Caco-2 (cell line): ENCODE measurements at regions of chr1 and their contacts with region 1.

Region 1: DNA sequence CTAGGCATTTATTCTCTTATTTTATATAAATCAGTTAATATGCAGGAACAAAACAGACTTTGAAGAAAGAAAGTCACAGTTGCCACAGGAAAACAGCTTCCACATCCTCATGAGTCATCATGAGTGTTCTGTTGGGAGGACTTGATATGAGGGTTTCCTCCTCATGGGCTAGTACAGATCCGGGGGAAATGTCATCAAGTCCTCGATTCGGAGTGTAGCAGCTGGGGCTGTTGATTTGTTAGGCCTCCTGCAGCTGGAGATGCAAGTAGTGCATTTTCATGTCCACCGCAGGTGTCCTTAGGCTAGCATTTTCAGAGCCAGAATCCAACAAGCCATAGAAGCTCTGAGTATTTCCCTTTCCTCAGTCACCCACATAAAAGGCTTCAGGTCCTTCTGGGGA is 36.7 kb downstream of the ADAM30 start:
- DNase-seq: no peak
- H3K4me3 ChIP-seq: no peak overlapping the region
- H3K4me3 Mint-ChIP-seq: no peak overlapping the region
- H3K27ac Mint-ChIP-seq: no peak overlapping the region
- H3K4me1 ChIP-seq: peaks cover 16% of the 10 kb centered on the region
- H3K4me1 Mint-ChIP-seq: peaks cover 6% of the 10 kb centered on the region
- H3K27me3 ChIP-seq: no peaks in the 10 kb centered on the region
- H3K27me3 Mint-ChIP-seq: no peaks in the 10 kb centered on the region
- CTCF ChIP-seq: no peak

Region 2: DNA sequence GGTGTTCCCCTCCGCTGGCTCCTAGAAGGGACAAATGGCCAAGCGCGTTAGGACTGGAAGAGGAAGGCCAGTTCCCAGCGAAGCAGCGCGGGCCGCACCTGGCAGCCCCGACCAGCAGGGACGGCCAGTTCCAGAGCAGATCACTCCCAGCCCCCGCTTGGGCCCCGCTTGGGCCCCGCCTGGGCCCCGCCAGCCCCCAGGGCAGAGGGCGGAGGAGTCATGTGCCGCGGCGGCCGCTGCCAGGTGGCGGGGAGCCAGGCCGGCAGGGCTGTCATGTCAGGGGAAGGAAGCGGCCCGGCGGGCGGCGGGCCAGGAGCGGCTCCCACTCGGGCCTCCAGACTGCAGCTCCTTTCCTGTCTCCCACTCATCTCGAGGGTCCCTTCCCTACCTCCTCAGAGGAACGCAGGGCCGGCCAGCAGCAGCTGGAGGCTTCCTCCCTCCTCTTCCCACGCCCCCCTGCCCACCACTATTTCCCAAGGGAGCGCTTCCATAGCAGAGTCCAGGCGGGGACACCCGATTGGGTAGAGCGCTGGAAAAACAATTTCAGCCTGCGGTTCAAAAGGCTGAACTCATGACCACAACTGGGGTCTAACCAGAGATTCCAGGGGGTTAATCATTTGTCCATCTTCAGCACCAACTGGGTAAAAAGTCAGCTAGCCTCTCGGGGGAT is 228.1 kb before region 1 on chr1:
- CTCF ChIA-PET with region 1: no interaction called
- POLR2A ChIA-PET with region 1: no interaction called
- intact Hi-C with region 1: no loop called
- DNase-seq: no peak
- H3K4me3 ChIP-seq: no peak overlapping the region
- H3K4me3 Mint-ChIP-seq: no peak overlapping the region
- H3K27ac Mint-ChIP-seq: no peak overlapping the region
- H3K4me1 ChIP-seq: no peaks in the 10 kb centered on the region
- H3K4me1 Mint-ChIP-seq: no peaks in the 10 kb centered on the region
- H3K27me3 ChIP-seq: no peaks in the 10 kb centered on the region
- H3K27me3 Mint-ChIP-seq: no peaks in the 10 kb centered on the region
- CTCF ChIP-seq: no peak

Region 3: DNA sequence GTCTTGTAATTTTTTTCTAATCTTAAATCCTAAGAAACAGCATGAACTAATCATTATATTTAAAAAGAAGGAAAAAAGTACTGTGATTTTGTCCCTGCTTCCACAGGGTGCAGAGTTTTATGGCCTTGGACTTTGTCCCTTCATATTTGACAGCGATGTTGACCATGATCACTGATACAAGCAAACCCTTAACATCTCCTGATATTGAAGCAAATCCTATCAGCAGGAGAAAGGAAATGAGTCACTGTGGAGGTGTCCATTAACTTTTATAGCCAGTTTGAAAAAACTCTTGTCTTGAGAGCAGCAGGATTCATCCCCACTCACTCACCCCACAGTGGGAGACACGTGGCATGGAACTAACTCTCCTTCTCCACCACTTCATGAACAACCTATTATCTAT is 43.2 kb before region 1 on chr1:
- CTCF ChIA-PET with region 1: no interaction called
- POLR2A ChIA-PET with region 1: no interaction called
- intact Hi-C with region 1: loop called (anchors 2 kb)
- DNase-seq: peak; percentile 53 to 60
- H3K4me3 ChIP-seq: no peak overlapping the region
- H3K4me3 Mint-ChIP-seq: peak overlapping the region; percentile 40
- H3K27ac Mint-ChIP-seq: peak overlapping the region; percentile 74
- H3K4me1 ChIP-seq: peaks cover 31% of the 10 kb centered on the region
- H3K4me1 Mint-ChIP-seq: peaks cover 28% of the 10 kb centered on the region
- H3K27me3 ChIP-seq: no peaks in the 10 kb centered on the region
- H3K27me3 Mint-ChIP-seq: no peaks in the 10 kb centered on the region
- CTCF ChIP-seq: no peak

Region 4: GRCh38 chr1:119827010-119827409 is 32.6 kb before region 1 on chr1:
- CTCF ChIA-PET with region 1: no interaction called
- POLR2A ChIA-PET with region 1: no interaction called
- intact Hi-C with region 1: loop called (anchors 5 kb)
- DNase-seq: no peak
- H3K4me3 ChIP-seq: no peak overlapping the region
- H3K4me3 Mint-ChIP-seq: no peak overlapping the region
- H3K27ac Mint-ChIP-seq: no peak overlapping the region
- H3K4me1 ChIP-seq: peaks cover 19% of the 10 kb centered on the region; the same call in 1 of the 2 replicates
- H3K4me1 Mint-ChIP-seq: peaks cover 12% of the 10 kb centered on the region
- H3K27me3 ChIP-seq: no peaks in the 10 kb centered on the region
- H3K27me3 Mint-ChIP-seq: no peaks in the 10 kb centered on the region
- CTCF ChIP-seq: peak in 1 of 2 experiments; percentile 2

Region 5: DNA sequence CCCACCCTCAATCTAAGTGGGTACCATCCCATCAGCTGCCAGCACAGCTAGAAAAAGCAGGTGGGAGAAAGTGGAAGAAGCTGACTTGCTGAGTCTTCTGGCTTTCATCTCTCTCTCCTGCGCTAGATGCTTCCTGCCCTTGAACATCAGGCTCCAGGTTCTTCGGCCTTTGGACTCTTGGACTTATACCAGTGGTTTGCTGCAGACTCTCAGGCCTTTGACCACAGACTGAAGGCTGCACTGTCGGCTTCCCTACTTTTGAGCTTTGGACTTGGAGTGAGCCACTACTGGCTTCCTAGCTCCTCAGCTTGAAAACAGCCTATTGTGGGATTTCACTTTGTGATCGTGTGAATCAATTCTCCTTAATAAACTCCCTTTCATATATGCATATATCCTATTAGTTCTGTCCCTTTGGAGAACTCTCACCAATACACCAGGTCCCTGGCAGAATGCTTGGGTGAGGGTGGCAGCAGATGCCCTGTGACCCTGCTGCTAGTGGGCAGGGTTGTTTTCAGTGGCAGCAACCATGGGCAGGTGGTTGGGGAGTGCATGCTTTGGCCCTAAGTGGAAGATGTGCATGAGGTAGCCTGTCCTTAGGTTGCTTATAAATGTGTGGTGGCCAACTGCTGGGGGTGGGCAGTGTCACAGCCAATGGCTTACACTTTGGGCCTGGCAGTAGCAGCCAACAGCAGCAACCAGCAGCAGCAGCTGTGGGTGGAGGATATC is 47.4 kb after region 1 on chr1:
- CTCF ChIA-PET with region 1: no interaction called
- POLR2A ChIA-PET with region 1: no interaction called
- intact Hi-C with region 1: no loop called
- DNase-seq: no peak
- H3K4me3 ChIP-seq: no peak overlapping the region
- H3K4me3 Mint-ChIP-seq: no peak overlapping the region
- H3K27ac Mint-ChIP-seq: no peak overlapping the region
- H3K4me1 ChIP-seq: 0 out of 2 replicates have a peak, but pooled peaks cover 10% of the 10 kb centered on the region
- H3K4me1 Mint-ChIP-seq: peaks cover 7% of the 10 kb centered on the region
- H3K27me3 ChIP-seq: no peaks in the 10 kb centered on the region
- H3K27me3 Mint-ChIP-seq: no peaks in the 10 kb centered on the region
- CTCF ChIP-seq: no peak